ENCODE measurements at regions of chr2 and their contacts with region 1.

Region 1: DNA sequence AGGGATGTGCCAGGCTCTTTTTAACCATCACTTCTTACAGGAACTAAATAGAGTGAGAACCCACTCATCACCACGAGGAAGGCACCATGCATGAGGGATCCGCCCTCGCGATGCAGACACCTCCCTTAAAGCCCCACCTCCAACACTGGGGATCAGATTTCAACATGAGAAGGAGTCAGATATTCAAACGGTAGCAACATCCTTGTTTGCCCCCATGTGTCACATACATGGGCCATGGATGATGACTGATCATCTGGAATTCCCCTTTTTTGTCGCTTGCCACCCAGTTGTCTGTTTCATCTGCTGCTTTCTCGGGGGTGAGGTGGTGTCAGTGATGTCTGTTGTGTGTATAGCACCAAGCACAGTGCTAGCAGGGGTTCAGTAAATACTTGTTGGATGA is 57.9 kb downstream of the NCK2 start:
- DNase-seq: peak; percentile 86
- ATAC-seq: peak; percentile 75
- H3K4me3 ChIP-seq: peak overlapping the region in 1 of 5 experiments; percentile 16
- H3K4me3 Mint-ChIP-seq: peak overlapping the region; percentile 66
- H3K27ac ChIP-seq: peak overlapping the region; percentile 86 to 92
- H3K27ac Mint-ChIP-seq: peak overlapping the region; percentile 94
- H3K4me1 ChIP-seq: peaks cover 81 to 84% of the 10 kb centered on the region in 2 donors
- H3K4me1 Mint-ChIP-seq: peaks cover 85% of the 10 kb centered on the region
- H3K27me3 ChIP-seq: no peaks in the 10 kb centered on the region
- H3K27me3 Mint-ChIP-seq: no peaks in the 10 kb centered on the region
- CTCF ChIP-seq: no peak

Region 2: DNA sequence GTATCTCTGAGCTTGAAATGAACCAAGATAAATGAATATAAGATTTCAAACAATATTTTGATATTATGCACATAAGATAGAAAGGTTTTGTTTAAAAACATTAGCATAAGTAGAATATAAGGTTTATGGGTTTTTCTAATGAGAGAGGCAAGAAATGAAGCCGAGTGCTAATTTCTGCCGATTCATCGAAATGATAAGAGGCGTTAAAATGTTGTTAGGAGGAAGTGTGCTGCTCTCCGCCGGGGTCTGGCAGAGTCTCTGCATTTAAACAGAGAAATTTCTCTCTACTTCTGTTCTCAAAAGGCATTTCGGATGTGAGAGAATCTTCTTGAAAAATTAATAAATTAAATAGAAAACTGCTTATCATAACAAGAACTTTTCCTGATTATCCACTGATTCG is 681.2 kb before region 1 on chr2:
- CTCF ChIA-PET with region 1: no interaction called
- POLR2A ChIA-PET with region 1: no interaction called
- intact Hi-C with region 1: no loop called
- DNase-seq: no peak
- ATAC-seq: no peak
- H3K4me3 ChIP-seq: no peak overlapping the region
- H3K4me3 Mint-ChIP-seq: no peak overlapping the region
- H3K27ac ChIP-seq: no peak overlapping the region
- H3K27ac Mint-ChIP-seq: no peak overlapping the region
- H3K4me1 ChIP-seq: no peaks in the 10 kb centered on the region
- H3K4me1 Mint-ChIP-seq: peaks cover 1% of the 10 kb centered on the region
- H3K27me3 ChIP-seq: no peaks in the 10 kb centered on the region
- H3K27me3 Mint-ChIP-seq: peaks cover 24% of the 10 kb centered on the region
- CTCF ChIP-seq: no peak

Region 3: DNA sequence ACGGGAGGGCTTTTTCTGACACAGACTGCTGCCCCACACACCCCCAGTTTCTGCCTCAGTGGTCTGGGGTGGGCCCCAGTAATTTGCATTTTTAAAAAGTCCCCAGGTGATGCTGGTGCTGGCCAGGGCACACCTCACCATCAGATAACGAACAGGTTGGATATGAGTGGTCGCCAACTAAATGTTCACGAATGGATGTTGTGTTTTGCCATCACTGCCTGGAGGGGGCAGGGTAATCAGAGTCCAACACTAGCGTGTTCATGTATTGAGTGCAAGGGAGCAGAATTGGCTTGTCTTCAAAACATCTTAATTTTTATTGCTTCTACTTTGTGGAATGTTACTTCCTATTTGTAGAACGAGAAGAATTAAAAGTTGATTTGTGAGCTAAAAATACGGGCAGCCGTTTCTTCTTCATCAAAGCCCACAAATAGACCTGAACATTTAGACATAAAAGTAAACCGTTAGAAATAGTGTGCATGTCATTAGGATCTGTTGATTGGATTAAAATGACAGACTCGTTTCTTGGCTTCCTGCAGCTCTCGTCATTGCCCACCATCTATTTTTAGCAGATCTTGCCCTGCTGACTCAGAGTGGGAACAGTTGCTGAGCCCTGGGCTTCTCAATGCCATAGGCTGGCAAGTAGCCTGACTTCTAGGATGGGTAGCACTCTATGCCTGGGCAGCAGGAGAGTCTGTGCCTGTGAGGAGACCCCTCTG is 12.7 kb before region 1 on chr2:
- CTCF ChIA-PET with region 1: interaction called, 15 read pairs
- POLR2A ChIA-PET with region 1: interaction called, 3 read pairs
- intact Hi-C with region 1: loop called (anchors 1 kb)
- DNase-seq: peak; percentile 55
- ATAC-seq: peak; percentile 65
- H3K4me3 ChIP-seq: peak overlapping the region in 2 of 5 experiments; percentile 18 to 26
- H3K4me3 Mint-ChIP-seq: peak overlapping the region; percentile 77
- H3K27ac ChIP-seq: peak overlapping the region; percentile 64 to 78
- H3K27ac Mint-ChIP-seq: peak overlapping the region; percentile 91
- H3K4me1 ChIP-seq: peaks cover 76 to 86% of the 10 kb centered on the region in 2 donors
- H3K4me1 Mint-ChIP-seq: peaks cover 83% of the 10 kb centered on the region
- H3K27me3 ChIP-seq: no peaks in the 10 kb centered on the region
- H3K27me3 Mint-ChIP-seq: no peaks in the 10 kb centered on the region
- CTCF ChIP-seq: peak; percentile 41

Measured in B cell (primary cell).